ENCODE measurements at regions of chr14 and their contacts with region 1.

Region 1: GRCh38 chr14:33444136-33444535 is 505.5 kb downstream of the NPAS3 start:
- DNase-seq: no peak
- ATAC-seq: no peak
- H3K4me3 ChIP-seq: no peak overlapping the region
- H3K27ac ChIP-seq: no peak overlapping the region
- H3K4me1 ChIP-seq: peaks cover 0 to 6% (median 0%) of the 10 kb centered on the region in 12 donors
- H3K27me3 ChIP-seq: no peaks in the 10 kb centered on the region
- CTCF ChIP-seq: no peak
- POLR2A ChIP-seq: no peak

Region 2: GRCh38 chr14:33229269-33229929 is 214.7 kb before region 1 on chr14:
- intact Hi-C with region 1: loop called in 1 of 10 experiments (anchors 10 kb)
- DNase-seq: no peak
- ATAC-seq: no peak
- H3K4me3 ChIP-seq: no peak overlapping the region
- H3K27ac ChIP-seq: no peak overlapping the region
- H3K4me1 ChIP-seq: no peaks in the 10 kb centered on the region
- H3K27me3 ChIP-seq: peaks cover 0 to 4% (median 0%) of the 10 kb centered on the region in 9 donors
- CTCF ChIP-seq: no peak
- POLR2A ChIP-seq: no peak